ENCODE measurements at regions of chr17 and their contacts with region 1.

Region 1: DNA sequence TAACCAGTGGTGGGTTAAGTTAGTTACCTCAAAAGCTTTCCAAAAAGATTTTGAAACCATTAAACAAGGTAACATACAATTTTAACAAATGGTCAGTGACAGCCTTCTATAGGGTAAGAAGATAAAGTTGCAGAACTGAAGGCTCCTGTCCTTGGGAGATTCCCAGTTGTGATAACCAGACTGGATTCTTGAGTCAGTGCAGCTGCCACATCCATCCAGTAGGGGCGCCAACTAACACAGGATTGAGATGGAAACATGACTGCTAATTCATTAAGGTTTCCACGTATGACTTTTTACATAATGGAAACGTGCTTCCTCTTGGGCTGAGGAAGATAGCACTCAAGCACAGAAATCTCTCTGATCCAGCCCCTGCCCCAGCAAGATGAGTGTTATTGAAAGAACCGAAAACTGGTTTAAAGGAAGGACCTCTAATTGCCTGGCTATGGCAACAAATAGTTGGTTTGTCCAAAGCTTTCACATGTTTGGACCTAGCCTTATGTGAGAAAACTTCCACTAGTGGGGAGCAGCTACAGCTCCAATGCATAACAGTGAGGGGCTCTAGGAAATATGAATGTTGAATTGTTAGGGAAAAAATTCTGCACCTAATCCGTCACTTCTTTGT is 269.8 kb upstream of the MYOCD start:
- DNase-seq: peak in 1 of 2 experiments; percentile 68
- H3K4me3 ChIP-seq: no peak overlapping the region
- H3K27ac ChIP-seq: no peak overlapping the region
- H3K4me1 ChIP-seq: no peaks in the 10 kb centered on the region
- H3K27me3 ChIP-seq: no peaks in the 10 kb centered on the region
- CTCF ChIP-seq: peak; percentile 57 to 90 (median 61)
- EP300 ChIP-seq: no peak
- POLR2A ChIP-seq: no peak
- RAD21 ChIP-seq: peak; percentile 57 to 66

Region 2: GRCh38 chr17:12406623-12407215 is 10.9 kb after region 1 on chr17:
- CTCF ChIA-PET with region 1: interaction called, 11 read pairs
- POLR2A ChIA-PET with region 1: no interaction called
- DNase-seq: no peak
- H3K4me3 ChIP-seq: no peak overlapping the region
- H3K27ac ChIP-seq: no peak overlapping the region
- H3K4me1 ChIP-seq: no peaks in the 10 kb centered on the region
- H3K27me3 ChIP-seq: no peaks in the 10 kb centered on the region
- CTCF ChIP-seq: no peak
- EP300 ChIP-seq: no peak
- POLR2A ChIP-seq: no peak
- RAD21 ChIP-seq: no peak

Region 3: GRCh38 chr17:12459736-12460135 is 63.9 kb after region 1 on chr17:
- CTCF ChIA-PET with region 1: no interaction called
- POLR2A ChIA-PET with region 1: no interaction called
- DNase-seq: no peak
- H3K4me3 ChIP-seq: no peak overlapping the region
- H3K27ac ChIP-seq: no peak overlapping the region
- H3K4me1 ChIP-seq: no peaks in the 10 kb centered on the region
- H3K27me3 ChIP-seq: no peaks in the 10 kb centered on the region
- CTCF ChIP-seq: no peak
- EP300 ChIP-seq: no peak
- POLR2A ChIP-seq: no peak
- RAD21 ChIP-seq: no peak

Measured in H1 (cell line).